Esophagus muscularis mucosa (tissue), 4 donors: ENCODE measurements at regions of chr3 and their contacts with region 1.

Region 1: GRCh38 chr3:196073188-196073838 is 8.6 kb downstream of the TFRC start:
- DNase-seq: no peak
- H3K4me3 ChIP-seq: no peak overlapping the region
- H3K27ac ChIP-seq: no peak overlapping the region
- H3K4me1 ChIP-seq: peaks cover 0 to 3% (median 0%) of the 10 kb centered on the region in 4 donors
- H3K27me3 ChIP-seq: no peaks in the 10 kb centered on the region
- CTCF ChIP-seq: peak; percentile 65 to 79 (median 69)
- EP300 ChIP-seq: no peak
- POLR2A ChIP-seq: no peak

Region 2: DNA sequence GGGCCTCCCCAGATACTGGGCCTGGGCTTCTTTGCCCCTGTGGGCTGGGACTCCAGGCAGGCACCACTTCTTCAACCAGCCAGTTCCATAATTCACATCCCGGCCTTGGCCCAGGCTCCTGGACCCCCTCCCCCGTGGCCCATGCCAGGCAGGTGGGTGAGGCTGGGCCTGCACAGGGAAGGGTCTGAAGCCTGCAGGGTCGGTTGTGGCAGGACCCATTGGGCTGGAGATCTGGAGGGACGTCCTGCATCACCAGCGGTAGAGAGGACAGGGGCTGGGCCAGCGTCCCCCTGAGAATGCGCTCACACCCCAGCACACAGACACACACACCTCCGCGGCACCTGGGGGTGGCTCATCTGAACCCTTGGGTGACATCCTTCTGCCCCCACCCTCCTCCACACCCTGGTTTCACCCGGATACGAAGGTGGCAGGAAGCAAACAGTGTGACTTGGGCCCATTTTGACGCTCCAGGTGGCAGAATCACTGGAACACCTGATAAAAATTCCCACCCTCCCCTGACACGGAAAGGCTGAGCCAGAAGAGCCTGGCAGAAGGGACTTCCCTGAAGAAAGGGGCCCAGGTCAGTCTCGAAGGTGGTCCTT is 122.5 kb after region 1 on chr3:
- intact Hi-C with region 1: loop called (anchors 2 kb)
- DNase-seq: no peak
- H3K4me3 ChIP-seq: no peak overlapping the region
- H3K27ac ChIP-seq: no peak overlapping the region
- H3K4me1 ChIP-seq: peaks cover 0 to 12% (median 6%) of the 10 kb centered on the region in 4 donors
- H3K27me3 ChIP-seq: no peaks in the 10 kb centered on the region
- CTCF ChIP-seq: no peak
- EP300 ChIP-seq: no peak
- POLR2A ChIP-seq: no peak

Region 3: GRCh38 chr3:196528639-196529233 is 455.4 kb after region 1 on chr3:
- intact Hi-C with region 1: loop called (anchors 10 kb)
- DNase-seq: peak; percentile 93
- H3K4me3 ChIP-seq: peak overlapping the region; percentile 46 to 64 (median 54)
- H3K27ac ChIP-seq: peak overlapping the region in 3 of 4 donors; percentile 74 to 76 (median 74)
- H3K4me1 ChIP-seq: peaks cover 0 to 11% (median 9%) of the 10 kb centered on the region in 4 donors
- H3K27me3 ChIP-seq: peaks cover 0 to 7% (median 0%) of the 10 kb centered on the region in 4 donors
- CTCF ChIP-seq: peak; percentile 83 to 89 (median 83)
- EP300 ChIP-seq: no peak
- POLR2A ChIP-seq: no peak